Adrenal gland (tissue), 19 donors: ENCODE measurements at regions of chr15 and their contacts with region 1.

Region 1: DNA sequence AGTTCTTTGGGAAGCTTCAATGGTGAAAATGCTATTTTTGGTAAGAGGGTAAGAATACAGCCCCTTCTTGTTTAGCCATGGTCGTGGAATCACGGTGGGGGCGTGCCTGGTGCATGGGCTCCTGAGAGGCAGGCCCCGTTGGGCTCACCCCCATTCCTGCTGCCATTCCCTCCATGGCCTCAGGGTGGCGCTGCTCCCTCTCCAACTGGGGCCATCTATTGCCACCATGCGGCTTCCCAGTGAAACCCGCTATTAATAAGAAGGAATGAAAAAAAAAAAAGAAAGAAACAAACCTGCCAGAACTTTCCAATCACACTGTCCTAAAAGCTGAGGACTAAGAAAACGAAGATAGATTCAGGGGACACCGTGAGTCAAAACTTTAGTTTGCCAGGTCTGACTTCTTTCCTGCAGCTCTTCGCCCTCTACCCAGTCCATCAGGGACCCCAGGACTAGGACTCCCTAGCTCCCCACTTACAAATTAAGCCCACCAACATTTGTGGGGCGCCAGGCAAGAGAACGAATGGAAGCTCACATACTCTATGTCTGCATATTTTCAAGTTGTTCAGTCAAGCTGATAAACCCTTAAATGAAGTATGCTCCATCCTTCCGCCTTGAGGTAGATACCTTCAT is 30.6 kb upstream of the ABHD2 start:
- DNase-seq: peak; percentile 74 to 94 (median 83)
- H3K4me3 ChIP-seq: no peak overlapping the region
- H3K27ac ChIP-seq: no peak overlapping the region
- H3K4me1 ChIP-seq: no peaks in the 10 kb centered on the region
- H3K27me3 ChIP-seq: no peaks in the 10 kb centered on the region
- CTCF ChIP-seq: peak; percentile 94 to 100 (median 98)
- POLR2A ChIP-seq: no peak

Region 2: DNA sequence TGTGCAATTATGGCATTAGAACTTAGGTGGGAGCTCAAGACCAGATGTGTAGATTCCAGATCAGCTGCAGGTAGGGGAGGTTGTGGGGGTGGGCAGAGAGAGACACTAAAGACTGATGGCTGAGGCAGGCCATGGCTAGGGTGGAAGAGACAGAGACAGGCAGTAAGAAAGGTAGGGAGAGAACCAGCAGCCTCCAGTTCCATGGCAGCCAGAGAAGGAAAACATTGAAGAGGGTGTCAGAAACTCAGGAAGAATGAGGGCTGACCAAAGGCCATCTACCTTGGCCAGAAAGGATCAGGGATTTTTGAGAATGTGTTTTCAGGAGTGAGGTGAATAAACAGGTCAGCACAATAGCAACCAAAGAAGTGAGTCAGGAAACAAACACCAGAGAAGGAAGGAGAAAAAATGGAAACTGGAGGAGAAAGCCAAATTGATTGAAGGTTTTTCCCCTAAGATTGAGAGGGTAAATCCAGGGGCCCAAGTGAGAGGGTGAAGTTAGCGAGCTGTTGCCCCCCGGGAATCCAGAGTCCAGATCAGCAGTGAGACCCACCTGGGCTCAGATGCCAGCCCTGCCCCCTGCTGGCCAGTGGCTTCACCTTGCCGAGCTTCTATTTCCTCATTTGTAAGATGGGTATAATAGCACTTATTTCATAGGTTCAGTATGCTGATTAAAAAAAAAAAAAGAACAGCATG is 71.7 kb after region 1 on chr15:
- intact Hi-C with region 1: loop called in 1 of 2 experiments (anchors 5 kb)
- DNase-seq: peak in 1 of 7 donors; percentile 38
- H3K4me3 ChIP-seq: no peak overlapping the region
- H3K27ac ChIP-seq: peak overlapping the region in 4 of 5 donors; percentile 10 to 59 (median 42)
- H3K4me1 ChIP-seq: peaks cover 14 to 30% of the 10 kb centered on the region in 2 donors
- H3K27me3 ChIP-seq: no peaks in the 10 kb centered on the region
- CTCF ChIP-seq: peak; percentile 23 to 58 (median 51)
- POLR2A ChIP-seq: no peak